HEK293 (cell line): ENCODE measurements at regions of chr17 and their contacts with region 1.

Region 1: GRCh38 chr17:17890773-17891759 is 54.3 kb upstream of the SREBF1 start:
- H3K4me3 ChIP-seq: no peak overlapping the region
- H3K27ac ChIP-seq: no peak overlapping the region
- H3K4me1 ChIP-seq: no peaks in the 10 kb centered on the region
- CTCF ChIP-seq: peak; percentile 93

Region 2: DNA sequence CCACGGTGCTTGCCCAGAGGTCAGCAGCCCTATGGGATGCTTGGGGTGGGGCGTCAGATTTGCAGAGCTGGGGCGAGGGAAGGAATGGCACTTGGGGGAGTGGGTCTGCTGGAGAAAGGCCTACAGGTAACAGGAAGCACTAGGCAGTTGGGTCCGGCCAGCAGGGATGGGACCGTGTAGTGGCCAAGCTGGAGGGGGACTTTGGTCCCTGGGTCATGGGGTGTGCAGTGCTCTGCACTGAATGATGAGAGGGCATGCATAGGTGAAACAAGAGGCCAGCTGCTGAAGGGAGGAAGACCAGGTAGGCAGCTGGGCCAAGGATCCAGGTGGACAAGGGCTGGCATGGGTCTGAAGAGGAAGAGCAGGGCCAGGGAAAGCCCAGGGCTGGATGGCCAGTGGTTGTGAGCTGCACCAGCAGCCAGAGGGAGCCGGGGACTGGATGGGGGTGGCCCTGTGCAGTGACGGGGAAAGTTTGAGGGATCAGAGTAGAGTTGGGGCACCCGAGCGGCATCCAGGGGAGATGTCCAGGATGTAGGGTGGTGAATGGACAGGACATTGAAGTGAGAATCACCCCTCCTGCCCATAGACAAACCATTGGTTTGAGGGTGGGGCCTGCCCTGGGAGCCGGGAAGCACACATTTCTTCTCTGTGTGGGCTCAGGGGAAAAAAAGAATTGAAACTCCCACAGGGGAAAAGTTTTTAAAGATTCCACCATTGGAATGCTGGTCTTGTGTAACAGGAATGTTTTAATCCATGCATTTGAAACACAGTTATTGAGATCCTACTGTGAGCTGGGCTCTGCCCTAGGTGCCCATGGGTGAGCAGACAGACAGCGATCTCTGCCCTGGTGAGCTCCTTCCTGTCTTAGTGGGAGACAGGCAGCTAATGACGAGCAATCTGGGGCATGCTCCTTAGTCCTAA is 184.7 kb before region 1 on chr17:
- CTCF ChIA-PET with region 1: no interaction called
- POLR2A ChIA-PET with region 1: no interaction called
- H3K4me3 ChIP-seq: no peak overlapping the region
- H3K27ac ChIP-seq: no peak overlapping the region
- H3K4me1 ChIP-seq: peaks cover 15% of the 10 kb centered on the region
- CTCF ChIP-seq: no peak

Region 3: DNA sequence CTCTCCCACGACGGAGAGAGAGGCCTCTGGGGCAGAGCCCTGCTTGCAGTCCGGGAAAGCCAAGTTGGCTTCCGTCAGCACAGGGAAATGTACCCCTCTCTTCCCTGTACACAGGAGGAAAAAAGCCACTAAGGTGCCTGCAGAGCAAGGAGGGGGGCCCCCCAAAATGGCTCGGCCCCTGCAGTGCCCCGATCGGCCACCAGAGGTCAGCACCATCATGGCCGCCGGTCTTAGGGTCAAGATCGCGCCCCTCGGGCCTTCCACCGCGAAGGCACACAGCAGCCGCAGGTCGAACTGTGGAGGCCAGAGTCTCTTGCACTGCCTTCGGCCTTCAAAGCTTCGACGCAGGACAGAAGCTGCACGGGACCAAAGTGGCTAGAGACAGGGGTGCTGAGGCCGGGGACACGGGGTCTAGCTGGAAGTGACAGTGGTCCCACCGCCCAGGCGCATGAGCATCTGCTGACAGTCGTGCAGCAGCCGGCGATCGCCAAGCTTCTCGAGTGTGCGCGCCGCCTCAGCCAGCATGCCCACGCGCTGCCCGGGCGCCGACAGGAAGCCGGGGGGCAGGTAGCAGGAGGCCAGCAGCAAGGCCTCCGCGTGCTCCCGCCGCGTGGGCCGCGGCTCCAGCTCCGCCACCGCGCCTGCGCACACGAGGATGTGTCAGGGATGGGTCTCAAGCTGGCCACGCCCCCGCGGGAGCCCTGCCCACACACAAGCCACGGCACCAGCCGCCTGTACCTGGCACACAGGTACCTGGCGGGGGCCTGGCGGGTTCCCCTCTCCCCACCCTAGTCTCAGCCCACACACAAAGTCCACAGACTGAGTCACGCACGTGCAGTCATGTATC is 78.6 kb before region 1 on chr17:
- CTCF ChIA-PET with region 1: interaction called, 11 read pairs
- POLR2A ChIA-PET with region 1: no interaction called
- H3K4me3 ChIP-seq: no peak overlapping the region
- H3K27ac ChIP-seq: peak overlapping the region; percentile 52; the same call in 1 of the 2 replicates
- H3K4me1 ChIP-seq: peaks cover 6% of the 10 kb centered on the region
- CTCF ChIP-seq: peak; percentile 92

Region 4: GRCh38 chr17:17913695-17914332 is 22.7 kb after region 1 on chr17:
- CTCF ChIA-PET with region 1: interaction called, 121 read pairs
- POLR2A ChIA-PET with region 1: interaction called, 4 read pairs
- H3K4me3 ChIP-seq: no peak overlapping the region
- H3K27ac ChIP-seq: peak overlapping the region; percentile 60
- H3K4me1 ChIP-seq: peaks cover 12% of the 10 kb centered on the region
- CTCF ChIP-seq: no peak

Region 5: DNA sequence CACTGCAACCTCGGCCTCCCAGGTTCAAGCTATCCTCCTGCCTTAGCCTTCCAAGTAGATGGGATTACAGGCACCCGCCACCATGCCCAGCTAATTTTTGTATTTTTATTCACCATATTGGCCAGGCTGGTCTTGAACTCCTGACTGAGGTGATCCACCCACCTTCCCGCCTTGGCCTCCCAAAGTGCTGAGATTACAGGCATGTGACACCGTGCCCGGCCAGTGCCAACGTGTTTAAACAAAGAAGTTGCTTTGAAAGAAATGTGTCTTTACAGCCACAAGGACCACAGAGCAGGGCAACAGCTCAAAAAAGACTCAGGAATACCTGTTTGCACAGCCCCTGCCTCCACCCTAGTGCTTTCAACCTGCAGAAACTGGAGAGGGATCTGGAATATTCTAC is 122.9 kb after region 1 on chr17:
- CTCF ChIA-PET with region 1: interaction called, 11 read pairs
- POLR2A ChIA-PET with region 1: no interaction called
- H3K4me3 ChIP-seq: no peak overlapping the region
- H3K27ac ChIP-seq: no peak overlapping the region
- H3K4me1 ChIP-seq: no peaks in the 10 kb centered on the region
- CTCF ChIP-seq: no peak

Region 6: GRCh38 chr17:18038861-18039534 is 147.9 kb after region 1 on chr17 and contains the starts of genes ATPAF2 and GID4:
- CTCF ChIA-PET with region 1: interaction called, 74 read pairs
- POLR2A ChIA-PET with region 1: no interaction called
- H3K4me3 ChIP-seq: peak within 1 kb of the TSS; percentile 90
- H3K27ac ChIP-seq: peak within 1 kb of the TSS; percentile 83
- H3K4me1 ChIP-seq: peaks cover 25% of the 10 kb centered on the region
- CTCF ChIP-seq: peak; percentile 60; the same call in 1 of the 2 replicates